ENCODE measurements at regions of chr17 and their contacts with region 1.

Region 1: DNA sequence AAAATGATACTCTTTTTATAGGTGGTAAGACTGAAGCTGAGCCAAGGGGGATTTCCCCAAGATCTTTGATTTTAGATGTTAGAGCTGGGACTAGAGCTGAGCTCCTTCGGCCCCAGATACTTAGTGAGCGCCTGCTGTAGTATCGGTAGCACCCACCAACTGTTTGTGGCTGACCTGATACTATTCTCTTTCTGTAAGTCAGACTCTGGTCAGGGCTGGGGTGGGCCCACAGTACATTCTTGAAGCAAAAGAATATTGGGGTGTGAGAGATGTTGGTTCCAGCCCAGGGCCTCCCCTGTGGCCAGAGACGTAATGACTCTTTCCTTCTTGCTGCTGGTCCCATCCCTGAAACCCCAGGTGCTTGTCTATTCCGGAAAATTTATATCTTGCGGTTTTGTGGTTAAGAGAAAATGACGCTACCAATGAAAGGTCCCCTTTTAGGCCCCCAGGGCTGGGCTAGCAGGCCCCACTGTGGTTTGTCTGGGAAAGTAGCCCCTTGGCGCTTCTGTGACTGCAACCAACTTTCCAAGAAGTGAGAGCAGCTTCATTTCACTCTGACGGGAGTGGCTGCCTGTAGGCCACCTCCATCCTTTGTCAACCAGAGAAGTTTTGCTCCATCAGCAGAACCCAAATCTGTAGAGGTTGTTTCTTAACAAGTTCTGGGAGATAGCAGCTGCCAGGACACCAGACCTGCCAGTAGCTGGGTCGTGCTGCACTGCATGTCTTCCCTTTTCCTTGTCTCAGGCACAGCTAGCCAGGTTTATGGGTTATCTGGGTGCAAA is 86.4 kb upstream of the LGALS9 start:
- DNase-seq: peak in 1 of 9 donors; percentile 78
- ATAC-seq: peak; percentile 71
- H3K4me3 ChIP-seq: no peak overlapping the region
- H3K4me3 Mint-ChIP-seq: peak overlapping the region in 6 of 10 donors; percentile 9 to 80 (median 30)
- H3K27ac ChIP-seq: no peak overlapping the region
- H3K27ac Mint-ChIP-seq: peak overlapping the region in 5 of 9 donors; percentile 16 to 92 (median 19)
- H3K4me1 ChIP-seq: peaks cover 15 to 19% of the 10 kb centered on the region in 2 donors
- H3K4me1 Mint-ChIP-seq: peaks cover 18 to 79% (median 35%) of the 10 kb centered on the region in 7 donors
- H3K27me3 ChIP-seq: no peaks in the 10 kb centered on the region
- H3K27me3 Mint-ChIP-seq: peaks cover 0 to 3% (median 0%) of the 10 kb centered on the region in 5 donors

Region 2: DNA sequence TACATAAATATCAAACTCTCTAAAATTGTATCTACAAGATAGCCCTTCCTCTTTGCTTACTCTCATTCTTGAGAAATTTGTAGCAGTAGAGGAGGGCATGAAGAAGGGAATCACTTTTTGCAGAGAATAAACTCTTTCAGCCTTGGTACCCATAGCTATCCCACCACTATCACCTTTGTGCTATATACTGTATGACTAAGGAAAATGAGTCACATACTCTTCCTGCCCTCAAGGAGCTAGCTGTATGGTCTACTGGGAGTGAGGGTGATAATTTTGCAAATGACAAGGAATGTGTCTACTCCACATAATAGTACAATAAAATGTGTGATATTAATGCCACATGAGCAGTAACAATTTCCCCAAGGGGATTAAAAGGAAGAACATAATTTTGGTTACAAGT is 435.2 kb before region 1 on chr17:
- CTCF ChIA-PET with region 1: no interaction called
- POLR2A ChIA-PET with region 1: no interaction called
- intact Hi-C with region 1: no loop called
- DNase-seq: no peak
- ATAC-seq: no peak
- H3K4me3 ChIP-seq: no peak overlapping the region
- H3K4me3 Mint-ChIP-seq: no peak overlapping the region
- H3K27ac ChIP-seq: no peak overlapping the region
- H3K27ac Mint-ChIP-seq: no peak overlapping the region
- H3K4me1 ChIP-seq: no peaks in the 10 kb centered on the region
- H3K4me1 Mint-ChIP-seq: no peaks in the 10 kb centered on the region
- H3K27me3 ChIP-seq: no peaks in the 10 kb centered on the region
- H3K27me3 Mint-ChIP-seq: peaks cover 0 to 42% (median 22%) of the 10 kb centered on the region in 5 donors

Region 3: DNA sequence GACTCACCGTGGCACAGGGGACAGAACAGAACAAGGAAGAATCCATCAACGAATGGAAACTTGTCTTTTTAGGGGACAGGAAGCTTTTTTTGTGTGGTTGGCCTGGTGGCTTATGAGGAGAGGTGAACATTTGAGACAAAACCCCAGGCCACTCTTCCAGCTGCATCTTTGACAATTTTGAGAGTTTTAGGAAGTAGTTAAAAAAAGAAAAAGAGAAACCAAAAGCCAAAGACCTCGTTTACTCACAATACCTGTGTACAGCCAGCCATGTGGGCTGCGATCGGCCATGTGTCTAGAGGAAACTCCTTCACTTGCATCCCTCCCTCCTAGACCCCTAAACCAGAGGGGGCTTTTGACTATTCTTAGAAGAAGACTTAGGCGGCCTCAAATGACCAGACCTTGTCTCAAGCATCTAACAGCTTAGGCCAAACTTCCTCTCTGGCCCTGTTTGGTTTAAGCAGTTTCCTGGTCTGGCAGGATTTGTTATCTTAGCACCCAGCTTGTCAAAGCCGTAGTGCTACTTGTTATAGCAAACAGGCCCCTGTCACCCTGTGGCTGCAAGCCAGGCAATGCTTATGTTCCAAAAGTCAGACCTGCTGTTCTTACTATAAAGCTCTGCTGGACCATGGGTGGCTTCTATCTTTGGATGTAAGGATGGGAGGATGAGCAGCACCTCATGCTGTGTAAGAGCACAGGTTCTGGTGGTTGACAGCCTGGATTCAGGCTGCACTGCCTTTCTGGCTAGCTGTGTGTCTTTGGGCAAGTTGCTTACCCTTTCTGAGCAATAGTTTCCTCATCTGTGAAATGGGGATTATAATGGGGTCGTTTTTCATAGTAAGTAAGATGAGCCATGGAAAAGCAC is 70.6 kb before region 1 on chr17:
- CTCF ChIA-PET with region 1: no interaction called
- POLR2A ChIA-PET with region 1: no interaction called
- intact Hi-C with region 1: loop called (anchors 1 to 10 kb)
- DNase-seq: peak in 6 of 9 donors; percentile 12 to 76 (median 18)
- ATAC-seq: peak; percentile 85
- H3K4me3 ChIP-seq: peak overlapping the region; percentile 11
- H3K4me3 Mint-ChIP-seq: peak overlapping the region; percentile 16 to 86 (median 64)
- H3K27ac ChIP-seq: peak overlapping the region; percentile 43
- H3K27ac Mint-ChIP-seq: peak overlapping the region; percentile 76 to 97 (median 89)
- H3K4me1 ChIP-seq: peaks cover 19 to 44% of the 10 kb centered on the region in 2 donors
- H3K4me1 Mint-ChIP-seq: peaks cover 41 to 89% (median 49%) of the 10 kb centered on the region in 7 donors
- H3K27me3 ChIP-seq: no peaks in the 10 kb centered on the region
- H3K27me3 Mint-ChIP-seq: no peaks in the 10 kb centered on the region

Region 4: GRCh38 chr17:27526604-27527230 is 17.8 kb before region 1 on chr17:
- CTCF ChIA-PET with region 1: no interaction called
- POLR2A ChIA-PET with region 1: no interaction called
- intact Hi-C with region 1: loop called in 1 of 2 experiments (anchors 2 kb)
- DNase-seq: peak in 3 of 9 donors; percentile 4 to 60 (median 8)
- ATAC-seq: peak; percentile 79
- H3K4me3 ChIP-seq: no peak overlapping the region
- H3K4me3 Mint-ChIP-seq: peak overlapping the region in 7 of 10 donors; percentile 22 to 74 (median 43)
- H3K27ac ChIP-seq: no peak overlapping the region
- H3K27ac Mint-ChIP-seq: peak overlapping the region in 4 of 9 donors; percentile 12 to 74 (median 40)
- H3K4me1 ChIP-seq: no peaks in the 10 kb centered on the region
- H3K4me1 Mint-ChIP-seq: peaks cover 13 to 92% (median 31%) of the 10 kb centered on the region in 7 donors
- H3K27me3 ChIP-seq: no peaks in the 10 kb centered on the region
- H3K27me3 Mint-ChIP-seq: no peaks in the 10 kb centered on the region

Region 5: GRCh38 chr17:27578718-27579085 is 34.2 kb after region 1 on chr17:
- CTCF ChIA-PET with region 1: no interaction called
- POLR2A ChIA-PET with region 1: no interaction called
- intact Hi-C with region 1: loop called in 1 of 2 experiments (anchors 2 kb)
- DNase-seq: peak in 1 of 9 donors; percentile 65
- ATAC-seq: no peak
- H3K4me3 ChIP-seq: no peak overlapping the region
- H3K4me3 Mint-ChIP-seq: peak overlapping the region in 1 of 10 donors; percentile 31
- H3K27ac ChIP-seq: no peak overlapping the region
- H3K27ac Mint-ChIP-seq: peak overlapping the region in 1 of 9 donors; percentile 93
- H3K4me1 ChIP-seq: no peaks in the 10 kb centered on the region
- H3K4me1 Mint-ChIP-seq: peaks cover 0 to 72% (median 9%) of the 10 kb centered on the region in 7 donors
- H3K27me3 ChIP-seq: no peaks in the 10 kb centered on the region
- H3K27me3 Mint-ChIP-seq: no peaks in the 10 kb centered on the region

Measured in naive thymus-derived CD4-positive, alpha-beta T cell (primary cell).